Activated naive CD4-positive, alpha-beta T cell treated with anti-CD3 and anti-CD28 coated beads for 36 hours (primary cell): ENCODE measurements at regions of chr13 and their contacts with region 1.

Region 1: DNA sequence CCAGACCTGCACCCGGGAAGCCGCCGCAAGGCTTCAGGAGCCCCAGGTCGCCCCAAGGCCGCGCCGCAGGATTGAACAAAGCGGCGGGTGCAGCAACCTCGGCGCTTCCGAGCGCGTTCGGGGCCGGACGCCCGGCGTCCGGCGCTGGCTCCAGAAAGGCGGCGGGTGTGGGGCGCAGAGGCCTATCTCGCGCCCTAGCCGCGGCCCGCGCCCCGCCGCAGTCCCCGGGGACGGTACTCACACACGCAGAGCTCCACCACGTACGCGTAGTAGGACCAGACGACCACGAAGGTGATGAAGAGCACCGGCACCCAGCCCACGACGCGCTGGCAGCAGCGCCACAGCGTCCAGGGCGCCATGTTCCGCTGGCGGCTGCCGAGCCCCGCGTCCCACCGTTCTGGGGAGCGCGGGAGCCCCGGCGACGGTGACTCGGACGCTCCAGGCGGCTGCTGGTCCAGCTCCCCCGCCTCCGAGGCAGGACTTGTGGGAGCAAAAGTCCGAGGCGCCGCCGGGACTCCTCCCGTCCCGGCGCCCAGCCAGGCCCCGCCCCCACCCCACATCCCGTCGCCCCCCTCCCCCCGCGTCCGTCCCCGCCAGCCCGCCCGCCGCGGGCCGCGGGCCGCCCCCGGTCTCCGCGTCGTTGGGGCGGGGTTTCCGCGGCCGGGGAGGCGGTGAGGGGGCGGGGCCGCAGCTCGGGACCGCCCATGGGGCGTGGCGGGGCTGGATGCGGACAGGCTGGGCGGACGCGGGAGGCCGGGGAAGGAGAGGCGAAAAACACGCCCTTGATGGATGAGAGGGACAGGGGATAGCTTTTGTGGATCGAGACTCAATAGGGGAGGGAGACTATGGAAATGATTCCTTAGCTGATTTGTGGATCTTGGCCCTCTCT is at the start of gene ZDHHC20:
- DNase-seq: peak; percentile 89
- H3K4me3 Mint-ChIP-seq: peak within 1 kb of the TSS; percentile 92
- H3K27ac Mint-ChIP-seq: peak within 1 kb of the TSS; percentile 88
- H3K4me1 Mint-ChIP-seq: peaks cover 29% of the 10 kb centered on the region
- H3K27me3 Mint-ChIP-seq: no peaks in the 10 kb centered on the region
- total RNA-seq, gene ZDHHC20: 48.0 to 50.7 TPM

Region 2: GRCh38 chr13:21435710-21436151 is 23.3 kb before region 1 on chr13:
- CTCF ChIA-PET with region 1: no interaction called
- intact Hi-C with region 1: loop called (anchors 2 kb)
- DNase-seq: peak; percentile 60
- H3K4me3 Mint-ChIP-seq: no peak overlapping the region
- H3K27ac Mint-ChIP-seq: no peak overlapping the region
- H3K4me1 Mint-ChIP-seq: peaks cover 29% of the 10 kb centered on the region
- H3K27me3 Mint-ChIP-seq: no peaks in the 10 kb centered on the region

Region 3: GRCh38 chr13:21670883-21671619 is 212.0 kb after region 1 on chr13 and contains the start of gene FGF9:
- CTCF ChIA-PET with region 1: no interaction called
- intact Hi-C with region 1: loop called (anchors 2 kb)
- DNase-seq: peak; percentile 79
- H3K4me3 Mint-ChIP-seq: peak within 1 kb of the TSS; percentile 80
- H3K27ac Mint-ChIP-seq: no peak within 1 kb of the TSS
- H3K4me1 Mint-ChIP-seq: peaks cover 34% of the 10 kb centered on the region
- H3K27me3 Mint-ChIP-seq: peaks cover 32% of the 10 kb centered on the region
- total RNA-seq, gene FGF9: not detected

Region 4: GRCh38 chr13:21938168-21938567 is 479.1 kb after region 1 on chr13:
- CTCF ChIA-PET with region 1: no interaction called
- intact Hi-C with region 1: no loop called
- DNase-seq: no peak
- H3K4me3 Mint-ChIP-seq: no peak overlapping the region
- H3K27ac Mint-ChIP-seq: no peak overlapping the region
- H3K4me1 Mint-ChIP-seq: no peaks in the 10 kb centered on the region
- H3K27me3 Mint-ChIP-seq: peaks cover 4% of the 10 kb centered on the region